Transverse colon (tissue), 4 donors: ENCODE measurements at regions of chr4 and their contacts with region 1.

Region 1: DNA sequence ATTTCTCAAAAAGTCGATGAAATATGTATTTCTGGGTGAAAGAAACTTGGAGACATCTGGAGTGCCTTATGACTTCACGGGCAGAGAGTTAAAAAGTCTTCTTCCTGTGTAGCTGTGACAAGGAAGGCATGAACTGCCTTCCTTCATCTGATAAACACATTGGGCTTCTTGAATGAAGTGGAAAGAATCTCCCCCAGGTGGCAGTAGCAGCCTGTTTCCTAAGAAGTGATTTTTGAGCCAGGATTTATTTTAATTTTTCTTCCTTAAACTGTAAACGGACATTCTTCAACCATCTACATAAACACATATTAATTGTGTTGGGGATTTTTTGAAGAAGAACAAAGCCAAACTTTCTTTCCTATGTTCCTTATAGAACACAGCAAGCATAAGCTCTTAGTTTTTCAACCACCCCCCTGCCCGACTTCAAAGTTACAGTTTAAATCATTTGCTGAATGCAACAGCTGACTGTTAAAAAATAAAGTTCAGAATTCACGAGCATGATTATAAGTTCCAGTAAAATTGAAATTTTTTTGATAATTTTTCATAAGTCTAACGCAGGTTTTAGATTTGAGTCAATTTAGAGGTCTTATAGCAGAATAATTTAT is 980 bp upstream of the GIMD1 start:
- DNase-seq: no peak
- H3K4me3 ChIP-seq: no peak overlapping the region
- H3K27ac ChIP-seq: no peak overlapping the region
- H3K4me1 ChIP-seq: peaks cover 0 to 4% (median 0%) of the 10 kb centered on the region in 4 donors
- H3K27me3 ChIP-seq: peaks cover 3% of the 10 kb centered on the region
- CTCF ChIP-seq: peak; percentile 50 to 61 (median 57)
- EP300 ChIP-seq: no peak
- POLR2A ChIP-seq: no peak

Region 2: GRCh38 chr4:106809076-106809475 is 439.5 kb after region 1 on chr4:
- in situ Hi-C with region 1: loop called in 3 of 4 experiments (anchors 10 to 25 kb)
- intact Hi-C with region 1: no loop called
- DNase-seq: no peak
- H3K4me3 ChIP-seq: no peak overlapping the region
- H3K27ac ChIP-seq: no peak overlapping the region
- H3K4me1 ChIP-seq: peaks cover 0 to 6% (median 0%) of the 10 kb centered on the region in 4 donors
- H3K27me3 ChIP-seq: no peaks in the 10 kb centered on the region
- CTCF ChIP-seq: peak in 4 of 5 experiments; percentile 16 to 37 (median 26)
- EP300 ChIP-seq: no peak
- POLR2A ChIP-seq: no peak

Region 3: GRCh38 chr4:106898621-106899230 is 529.2 kb after region 1 on chr4:
- in situ Hi-C with region 1: loop called in 1 of 4 experiments (anchors 25 kb)
- intact Hi-C with region 1: no loop called
- DNase-seq: peak; percentile 12
- H3K4me3 ChIP-seq: no peak overlapping the region
- H3K27ac ChIP-seq: no peak overlapping the region
- H3K4me1 ChIP-seq: no peaks in the 10 kb centered on the region
- H3K27me3 ChIP-seq: no peaks in the 10 kb centered on the region
- CTCF ChIP-seq: peak; percentile 25 to 51 (median 49)
- EP300 ChIP-seq: no peak
- POLR2A ChIP-seq: no peak